ENCODE measurements at regions of chr14 and their contacts with region 1.

Region 1: GRCh38 chr14:50954811-50955372 is 10.6 kb upstream of the PYGL start:
- DNase-seq: no peak
- H3K4me3 ChIP-seq: no peak overlapping the region
- H3K27ac ChIP-seq: no peak overlapping the region
- H3K4me1 ChIP-seq: no peaks in the 10 kb centered on the region
- H3K27me3 ChIP-seq: no peaks in the 10 kb centered on the region
- CTCF ChIP-seq: peak; percentile 44 to 69 (median 52)

Region 2: GRCh38 chr14:51219473-51220448 is 264.9 kb after region 1 on chr14:
- intact Hi-C with region 1: loop called (anchors 2 kb)
- DNase-seq: no peak
- H3K4me3 ChIP-seq: no peak overlapping the region
- H3K27ac ChIP-seq: no peak overlapping the region
- H3K4me1 ChIP-seq: no peaks in the 10 kb centered on the region
- H3K27me3 ChIP-seq: no peaks in the 10 kb centered on the region
- CTCF ChIP-seq: peak; percentile 13 to 58 (median 30)